Posterior vena cava (tissue), 2 donors: ENCODE measurements at regions of chrX and their contacts with region 1.

Region 1: GRCh38 chrX:30831082-30831481 is 58.0 kb downstream of the TAB3 start:
- DNase-seq: no peak

Region 2: DNA sequence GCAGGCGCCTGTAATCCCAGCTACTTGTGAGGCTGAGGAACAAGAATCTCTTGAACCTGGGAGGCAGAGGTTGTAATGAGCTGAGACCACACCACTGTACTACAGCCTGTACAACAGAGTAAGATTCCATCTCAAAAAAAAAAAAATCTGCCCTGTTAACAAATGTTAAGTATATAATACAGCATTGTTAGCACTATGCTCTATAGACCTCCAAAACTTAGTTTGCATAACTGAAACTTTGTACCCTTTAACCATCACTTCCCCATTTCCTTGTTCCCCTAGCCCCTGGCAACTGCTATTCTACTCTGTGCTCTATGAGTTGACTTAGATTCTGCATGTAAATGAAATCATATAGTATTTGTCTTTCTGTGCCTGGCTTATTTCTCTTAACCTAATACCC is 18.8 kb before region 1 on chrX:
- intact Hi-C with region 1: loop called in 1 of 2 experiments (anchors 1 kb)
- DNase-seq: no peak